ENCODE measurements at regions of chr3 and their contacts with region 1.

Region 1: DNA sequence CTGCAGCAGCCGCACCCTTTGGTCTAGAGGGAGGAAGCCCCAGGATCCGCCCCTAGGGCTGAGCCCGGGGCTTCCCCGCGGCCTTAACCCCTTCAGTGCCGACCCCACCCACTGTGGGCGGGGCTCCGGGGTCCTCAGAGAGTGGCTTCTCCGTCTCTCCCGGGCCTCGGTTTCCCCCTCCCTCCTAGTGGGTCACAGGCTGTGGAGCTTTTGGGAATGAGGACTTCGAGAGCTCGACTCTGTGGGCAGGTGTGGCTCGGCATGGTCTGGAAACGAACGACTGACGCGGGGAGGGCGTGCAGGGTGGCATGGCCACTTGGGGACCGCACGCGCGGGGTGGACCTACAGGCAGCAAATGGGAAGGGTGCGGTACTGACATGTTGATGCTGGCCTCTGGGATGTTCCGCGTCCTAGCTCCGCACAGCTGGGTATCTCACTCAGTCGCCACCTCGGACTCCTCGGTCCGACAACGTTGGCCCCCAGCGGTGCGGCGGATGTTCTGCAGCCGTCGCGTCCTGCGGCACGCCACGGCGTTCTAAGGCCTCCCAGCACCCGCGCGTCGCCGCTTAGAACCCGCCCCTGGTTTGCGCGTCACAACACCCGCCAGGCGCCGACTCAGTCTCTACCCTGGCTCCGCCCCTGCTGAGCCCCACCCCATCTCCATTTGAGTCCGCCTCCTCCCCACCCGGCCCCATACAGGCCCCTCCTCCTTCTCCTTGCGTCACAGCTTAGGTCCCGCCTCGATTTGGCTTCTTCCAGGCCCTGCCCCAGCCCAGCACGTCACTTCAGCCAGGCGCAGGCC is at the starts of genes HYAL3 and NAA80:
- DNase-seq: no peak
- ATAC-seq: peak; percentile 53
- H3K4me3 ChIP-seq: peak within 1 kb of the TSS; percentile 66 to 91 (median 89)
- H3K27ac ChIP-seq: peak within 1 kb of the TSS; percentile 87
- H3K4me1 ChIP-seq: peaks cover 52% of the 10 kb centered on the region
- H3K27me3 ChIP-seq: no peaks in the 10 kb centered on the region; a peak in 1 of 5 replicates
- CTCF ChIP-seq: peak; percentile 54
- EP300 ChIP-seq: no peak
- POLR2A ChIP-seq: peak in 1 of 2 experiments; percentile 79; a peak in 2 of 4 replicates
- RAD21 ChIP-seq: peak; percentile 67; the same call in 1 of the 2 replicates
- total RNA-seq, gene HYAL3: 5.5 and 5.9 TPM in 2 replicates
- total RNA-seq, gene NAA80: 1.5 and 3.4 TPM in 2 replicates

Region 2: GRCh38 chr3:50245831-50246516 is 53.1 kb before region 1 on chr3:
- CTCF ChIA-PET with region 1: no interaction called
- POLR2A ChIA-PET with region 1: no interaction called
- in situ Hi-C with region 1: no loop called
- intact Hi-C with region 1: no loop called
- DNase-seq: no peak
- ATAC-seq: peak; percentile 91
- H3K4me3 ChIP-seq: peak overlapping the region; percentile 18 to 67 (median 51); a peak in 5 of 6 replicates
- H3K27ac ChIP-seq: peak overlapping the region; percentile 43
- H3K4me1 ChIP-seq: peaks cover 20% of the 10 kb centered on the region
- H3K27me3 ChIP-seq: no peaks in the 10 kb centered on the region
- CTCF ChIP-seq: peak; percentile 98
- EP300 ChIP-seq: no peak
- POLR2A ChIP-seq: no peak
- RAD21 ChIP-seq: peak; percentile 91

Region 3: GRCh38 chr3:50278868-50279224 is 20.2 kb before region 1 on chr3 and contains the start of gene LSMEM2:
- CTCF ChIA-PET with region 1: no interaction called
- POLR2A ChIA-PET with region 1: interaction called, 15 read pairs
- in situ Hi-C with region 1: no loop called
- intact Hi-C with region 1: no loop called
- DNase-seq: no peak
- ATAC-seq: peak; percentile 9
- H3K4me3 ChIP-seq: no peak within 1 kb of the TSS
- H3K27ac ChIP-seq: no peak within 1 kb of the TSS
- H3K4me1 ChIP-seq: peaks cover 37% of the 10 kb centered on the region
- H3K27me3 ChIP-seq: no peaks in the 10 kb centered on the region
- CTCF ChIP-seq: no peak
- EP300 ChIP-seq: no peak
- POLR2A ChIP-seq: no peak
- RAD21 ChIP-seq: no peak
- total RNA-seq, gene LSMEM2: 0.07 TPM in 1 of 2 replicates, not detected in the other

Region 4: GRCh38 chr3:50327943-50328691 is 29.1 kb after region 1 on chr3 and contains the start of gene TUSC2:
- CTCF ChIA-PET with region 1: interaction called, 14 read pairs
- POLR2A ChIA-PET with region 1: interaction called, 222 read pairs
- in situ Hi-C with region 1: no loop called
- intact Hi-C with region 1: loop called (anchors 1 kb)
- DNase-seq: peak; percentile 95
- ATAC-seq: peak; percentile 79
- H3K4me3 ChIP-seq: peak within 1 kb of the TSS; percentile 79 to 95 (median 92)
- H3K27ac ChIP-seq: peak within 1 kb of the TSS; percentile 67
- H3K4me1 ChIP-seq: peaks cover 52% of the 10 kb centered on the region
- H3K27me3 ChIP-seq: no peaks in the 10 kb centered on the region
- CTCF ChIP-seq: no peak; the same call in 1 of the 2 replicates
- EP300 ChIP-seq: no peak
- POLR2A ChIP-seq: peak in 1 of 2 experiments; percentile 80; a peak in 2 of 4 replicates
- RAD21 ChIP-seq: peak; percentile 39; the same call in 1 of the 2 replicates
- total RNA-seq, gene TUSC2: 35.9 and 36.7 TPM in 2 replicates

Region 5: DNA sequence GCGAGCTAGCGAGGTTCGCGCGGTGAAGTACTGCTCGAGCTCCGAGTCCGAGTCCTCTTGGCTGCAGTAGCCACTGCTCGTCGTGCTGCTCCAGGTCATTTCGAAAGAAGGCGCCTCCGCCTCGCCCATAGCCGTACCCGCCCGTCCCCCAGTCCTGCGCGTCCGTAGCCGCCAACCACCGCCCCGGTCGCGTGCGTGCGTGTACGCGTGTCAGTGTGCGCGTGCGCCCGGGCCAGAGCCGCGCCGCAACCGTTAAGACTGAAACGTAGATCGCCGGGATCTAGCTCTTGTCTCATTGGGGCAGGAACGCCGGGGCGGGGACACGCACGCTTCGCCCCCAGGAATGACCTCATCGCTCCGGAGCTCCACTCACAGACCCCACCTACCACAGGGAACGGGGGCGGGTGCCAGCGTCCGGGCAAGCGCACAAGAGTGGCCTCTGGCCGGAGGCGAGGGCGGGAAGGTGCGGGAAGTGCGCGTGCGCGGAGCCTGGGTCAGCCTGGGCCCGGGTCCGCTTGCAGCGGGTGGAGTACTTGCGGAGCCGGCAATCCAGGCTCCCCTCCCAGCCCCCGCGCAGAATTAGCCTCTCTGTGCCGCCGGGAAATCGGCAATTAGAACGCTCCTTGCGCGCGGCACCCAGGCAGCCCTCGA is 38.3 kb after region 1 on chr3:
- CTCF ChIA-PET with region 1: no interaction called
- POLR2A ChIA-PET with region 1: interaction called, 40 read pairs
- in situ Hi-C with region 1: no loop called
- intact Hi-C with region 1: no loop called
- DNase-seq: peak; percentile 98
- ATAC-seq: peak; percentile 89
- H3K4me3 ChIP-seq: peak overlapping the region; percentile 86 to 89 (median 88); a peak in 5 of 6 replicates
- H3K27ac ChIP-seq: peak overlapping the region; percentile 85
- H3K4me1 ChIP-seq: peaks cover 58% of the 10 kb centered on the region
- H3K27me3 ChIP-seq: peaks cover 1 to 2% of the 10 kb centered on the region in 2 experiments; a peak in 1 of 5 replicates
- CTCF ChIP-seq: peak; percentile 2; the same call in 1 of the 2 replicates
- EP300 ChIP-seq: no peak
- POLR2A ChIP-seq: peak in 1 of 2 experiments; percentile 61; a peak in 2 of 4 replicates
- RAD21 ChIP-seq: no peak; the same call in 1 of the 2 replicates